ENCODE measurements at regions of chr7 and their contacts with region 1.

Region 1: DNA sequence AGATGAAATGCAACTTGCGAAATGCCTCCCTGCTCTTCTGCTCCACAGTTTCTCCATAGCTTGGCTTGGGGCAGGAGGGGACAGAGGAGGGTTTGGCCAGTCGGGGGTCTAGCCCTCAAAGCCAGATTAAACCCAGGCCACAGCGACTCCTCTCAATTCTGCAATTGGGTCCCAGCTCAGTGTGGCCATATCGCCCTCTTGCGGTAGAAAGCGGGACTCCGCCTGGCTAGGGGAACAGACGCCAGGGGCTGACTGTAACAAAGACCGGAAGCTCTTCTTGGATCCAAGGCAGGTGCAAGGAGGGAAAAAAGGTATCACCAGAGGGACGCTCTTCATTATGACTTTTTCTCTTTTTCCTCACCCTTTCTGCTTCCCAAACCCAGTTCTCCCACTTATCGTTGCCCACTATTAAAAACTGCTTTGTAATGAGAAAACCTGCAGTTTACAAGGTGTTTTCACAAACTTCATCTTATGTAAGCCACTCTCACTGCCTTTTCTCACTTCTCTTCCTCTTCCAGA is 36.6 kb upstream of the TNPO3 start:
- DNase-seq: peak; percentile 78
- H3K4me3 Mint-ChIP-seq: no peak overlapping the region
- H3K27ac Mint-ChIP-seq: peak overlapping the region; percentile 18
- H3K4me1 Mint-ChIP-seq: peaks cover 31% of the 10 kb centered on the region
- H3K27me3 Mint-ChIP-seq: no peaks in the 10 kb centered on the region

Region 2: DNA sequence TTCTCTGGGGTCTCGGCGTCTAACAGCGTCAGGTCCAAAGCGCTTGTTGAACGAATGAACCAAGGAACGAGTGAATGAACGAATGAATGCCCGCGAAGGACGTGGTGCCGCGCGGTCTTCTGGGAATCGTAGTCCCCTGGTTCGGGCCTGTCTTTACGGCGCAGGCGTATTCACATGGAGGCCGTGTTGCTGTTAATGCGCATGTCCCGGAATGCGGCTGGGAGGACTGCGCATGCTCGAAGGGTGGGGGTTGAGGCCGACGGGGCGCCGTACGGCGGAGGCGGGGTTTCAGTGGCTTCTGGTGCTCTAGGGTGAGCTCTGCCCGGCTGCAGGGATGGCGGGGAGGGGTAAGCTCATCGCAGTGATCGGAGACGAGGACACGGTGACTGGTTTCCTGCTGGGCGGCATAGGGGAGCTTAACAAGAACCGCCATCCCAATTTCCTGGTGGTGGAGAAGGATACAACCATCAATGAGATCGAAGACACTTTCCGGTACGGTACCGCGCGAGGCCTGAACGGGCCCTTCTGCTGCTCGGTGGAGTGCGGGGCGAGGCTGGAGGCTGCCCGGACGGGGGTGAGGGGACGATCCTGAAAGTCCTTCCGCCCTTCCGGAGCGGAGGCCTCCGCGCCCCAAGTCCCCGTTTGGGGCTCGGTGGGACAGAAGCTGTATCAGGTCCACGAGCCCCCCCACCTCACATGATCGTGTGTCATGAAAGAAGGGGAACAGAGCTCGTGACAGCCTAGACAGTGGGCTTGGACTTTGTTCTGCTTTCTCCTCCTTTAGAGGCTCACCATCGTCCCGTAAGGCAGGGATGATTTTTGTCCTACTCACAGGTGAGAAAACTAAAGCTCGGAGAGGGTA is 228.7 kb before region 1 on chr7 and contains the start of gene ATP6V1F:
- intact Hi-C with region 1: loop called (anchors 1 kb)
- DNase-seq: peak; percentile 99
- H3K4me3 Mint-ChIP-seq: peak within 1 kb of the TSS; percentile 99
- H3K27ac Mint-ChIP-seq: peak within 1 kb of the TSS; percentile 96
- H3K4me1 Mint-ChIP-seq: peaks cover 19% of the 10 kb centered on the region
- H3K27me3 Mint-ChIP-seq: no peaks in the 10 kb centered on the region
- total RNA-seq, gene ATP6V1F: 131 and 134 TPM in 2 replicates

Region 3: DNA sequence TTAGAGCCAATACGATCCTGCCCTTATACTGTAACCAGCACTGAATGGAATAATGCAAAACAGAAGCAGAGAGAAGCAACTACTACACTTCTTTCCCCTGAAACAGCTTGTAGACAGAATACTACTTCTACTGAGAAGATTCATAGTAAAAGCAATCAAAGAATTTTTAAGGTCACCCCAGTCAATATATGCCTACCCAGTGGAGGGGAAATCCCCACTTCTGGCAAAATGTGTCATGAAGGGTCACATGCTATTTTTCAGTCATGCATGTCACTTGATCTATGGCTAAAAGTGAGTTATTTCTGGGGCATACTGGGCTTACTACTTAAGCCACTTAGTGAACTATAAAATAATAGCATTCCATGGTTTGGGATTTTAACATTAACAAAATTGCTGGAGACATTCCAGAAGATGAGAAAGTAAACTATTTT is 128.2 kb before region 1 on chr7:
- intact Hi-C with region 1: loop called (anchors 1 kb)
- DNase-seq: peak; percentile 34
- H3K4me3 Mint-ChIP-seq: peak overlapping the region; percentile 57
- H3K27ac Mint-ChIP-seq: peak overlapping the region; percentile 72
- H3K4me1 Mint-ChIP-seq: peaks cover 43% of the 10 kb centered on the region
- H3K27me3 Mint-ChIP-seq: no peaks in the 10 kb centered on the region

Region 4: DNA sequence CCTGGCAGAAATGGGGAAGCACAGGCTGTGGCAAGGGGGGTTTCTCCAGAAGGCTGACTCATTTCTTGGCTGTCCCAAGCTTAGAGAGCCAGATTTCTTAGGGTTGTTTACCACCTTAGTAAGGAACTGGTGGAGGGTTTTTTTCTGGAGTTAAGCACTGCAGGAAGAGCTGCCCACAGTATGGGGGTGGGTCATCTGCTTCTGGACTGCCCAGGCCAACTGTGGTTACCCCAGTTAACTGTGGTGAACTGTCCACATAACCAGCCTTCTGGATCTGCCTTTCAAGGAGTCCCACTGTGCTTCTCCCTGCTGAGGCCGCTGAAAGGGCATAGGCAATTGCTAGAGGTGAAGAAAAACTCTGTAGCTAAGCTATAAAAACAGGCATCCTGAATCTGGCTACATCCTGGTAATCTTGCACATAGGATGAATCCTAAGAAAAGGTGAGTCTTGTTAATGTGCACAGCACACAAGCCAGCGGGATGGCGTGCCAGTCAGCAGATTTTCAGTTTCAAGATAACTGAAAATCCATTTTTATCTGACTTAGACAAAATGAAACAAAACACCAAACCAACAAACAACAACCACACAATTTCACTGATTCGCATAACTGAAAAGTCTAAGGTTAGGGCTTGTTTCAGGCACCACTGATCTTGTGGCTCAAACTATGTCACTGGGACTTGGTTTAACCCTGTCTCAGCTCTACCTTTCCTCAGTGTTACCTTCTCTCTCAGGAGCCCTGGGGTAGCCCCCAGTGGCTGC is 31.4 kb after region 1 on chr7:
- intact Hi-C with region 1: loop called (anchors 1 kb)
- DNase-seq: peak; percentile 14
- H3K4me3 Mint-ChIP-seq: peak overlapping the region; percentile 22
- H3K27ac Mint-ChIP-seq: peak overlapping the region; percentile 85
- H3K4me1 Mint-ChIP-seq: peaks cover 39% of the 10 kb centered on the region
- H3K27me3 Mint-ChIP-seq: peaks cover 15% of the 10 kb centered on the region

Region 5: DNA sequence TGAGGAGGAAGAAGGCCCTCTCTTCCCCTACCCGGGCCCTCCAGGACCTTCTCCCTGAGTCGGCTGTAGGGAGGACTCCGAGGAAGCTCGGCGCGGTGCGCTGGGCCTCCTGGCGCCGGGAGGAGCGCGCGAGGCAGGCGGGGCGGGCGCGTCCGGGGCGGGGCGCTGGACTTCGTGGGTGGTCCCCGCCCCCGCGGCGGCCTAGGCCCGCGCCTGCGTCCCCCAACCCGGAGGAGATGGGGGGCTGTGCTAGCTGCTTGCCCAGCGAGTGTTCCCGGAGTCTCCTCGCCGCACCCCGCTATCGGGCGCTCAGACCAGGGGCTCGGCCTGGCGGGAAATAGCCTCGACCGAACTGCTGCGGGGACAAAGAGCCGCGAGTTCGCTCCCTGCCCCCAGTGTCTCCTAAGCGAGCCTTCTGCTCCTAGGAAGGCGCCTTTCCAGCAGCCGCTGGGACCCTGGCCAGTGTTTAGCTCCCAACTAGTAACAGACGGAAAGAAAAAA is 77.7 kb after region 1 on chr7:
- intact Hi-C with region 1: loop called (anchors 2 kb)
- DNase-seq: peak; percentile 28
- H3K4me3 Mint-ChIP-seq: peak overlapping the region; percentile 76
- H3K27ac Mint-ChIP-seq: no peak overlapping the region
- H3K4me1 Mint-ChIP-seq: peaks cover 20% of the 10 kb centered on the region
- H3K27me3 Mint-ChIP-seq: peaks cover 21% of the 10 kb centered on the region